CD8-positive, alpha-beta T cell (primary cell): ENCODE measurements at regions of chr11 and their contacts with region 1.

Region 1: GRCh38 chr11:35246745-35247144 is 107.8 kb downstream of the CD44 start:
- DNase-seq: no peak
- ATAC-seq: no peak
- H3K4me3 ChIP-seq: no peak overlapping the region
- H3K4me3 Mint-ChIP-seq: no peak overlapping the region
- H3K27ac ChIP-seq: peak overlapping the region; percentile 79 to 84
- H3K27ac Mint-ChIP-seq: peak overlapping the region; percentile 98
- H3K4me1 ChIP-seq: peaks cover 63% of the 10 kb centered on the region
- H3K4me1 Mint-ChIP-seq: peaks cover 80% of the 10 kb centered on the region
- H3K27me3 ChIP-seq: no peaks in the 10 kb centered on the region
- H3K27me3 Mint-ChIP-seq: no peaks in the 10 kb centered on the region
- CTCF ChIP-seq: no peak

Region 2: GRCh38 chr11:35040221-35040942 is 206.4 kb before region 1 on chr11:
- CTCF ChIA-PET with region 1: no interaction called
- POLR2A ChIA-PET with region 1: no interaction called
- intact Hi-C with region 1: loop called in 1 of 2 experiments (anchors 5 kb)
- DNase-seq: peak in 8 of 9 experiments; percentile 16 to 87 (median 55)
- ATAC-seq: peak; percentile 77
- H3K4me3 ChIP-seq: peak overlapping the region in 1 of 2 experiments; percentile 46
- H3K4me3 Mint-ChIP-seq: peak overlapping the region; percentile 79
- H3K27ac ChIP-seq: peak overlapping the region; percentile 36 to 83
- H3K27ac Mint-ChIP-seq: peak overlapping the region; percentile 97
- H3K4me1 ChIP-seq: peaks cover 25% of the 10 kb centered on the region
- H3K4me1 Mint-ChIP-seq: peaks cover 35% of the 10 kb centered on the region
- H3K27me3 ChIP-seq: no peaks in the 10 kb centered on the region
- H3K27me3 Mint-ChIP-seq: no peaks in the 10 kb centered on the region
- CTCF ChIP-seq: no peak

Region 3: DNA sequence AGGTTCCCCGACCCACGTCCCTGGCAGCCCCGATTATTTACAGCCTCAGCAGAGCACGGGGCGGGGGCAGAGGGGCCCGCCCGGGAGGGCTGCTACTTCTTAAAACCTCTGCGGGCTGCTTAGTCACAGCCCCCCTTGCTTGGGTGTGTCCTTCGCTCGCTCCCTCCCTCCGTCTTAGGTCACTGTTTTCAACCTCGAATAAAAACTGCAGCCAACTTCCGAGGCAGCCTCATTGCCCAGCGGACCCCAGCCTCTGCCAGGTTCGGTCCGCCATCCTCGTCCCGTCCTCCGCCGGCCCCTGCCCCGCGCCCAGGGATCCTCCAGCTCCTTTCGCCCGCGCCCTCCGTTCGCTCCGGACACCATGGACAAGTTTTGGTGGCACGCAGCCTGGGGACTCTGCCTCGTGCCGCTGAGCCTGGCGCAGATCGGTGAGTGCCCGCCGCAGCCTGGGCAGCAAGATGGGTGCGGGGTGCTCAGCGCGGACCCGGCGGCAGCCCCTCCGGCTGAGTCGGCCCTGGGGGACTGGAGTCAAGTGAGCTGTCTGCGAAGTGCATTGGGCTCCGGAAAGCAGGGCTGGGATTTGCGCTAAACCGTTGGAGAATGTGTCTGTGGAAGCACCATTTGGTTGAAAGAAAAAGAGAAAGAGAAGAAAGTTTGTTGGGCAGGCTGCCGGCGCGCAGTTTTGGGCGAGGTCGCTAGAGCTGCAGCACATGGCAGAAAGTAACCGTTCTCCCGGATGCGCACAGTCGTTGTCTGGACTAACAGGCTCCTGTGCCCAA is 107.6 kb before region 1 on chr11 and contains the start of gene CD44:
- CTCF ChIA-PET with region 1: no interaction called
- POLR2A ChIA-PET with region 1: interaction called, 11 read pairs
- intact Hi-C with region 1: loop called in 1 of 2 experiments (anchors 2 kb)
- DNase-seq: peak; percentile 67 to 93 (median 85)
- ATAC-seq: peak; percentile 83
- H3K4me3 ChIP-seq: peak within 1 kb of the TSS; percentile 80 to 97
- H3K4me3 Mint-ChIP-seq: peak within 1 kb of the TSS; percentile 90
- H3K27ac ChIP-seq: peak within 1 kb of the TSS; percentile 82 to 98
- H3K27ac Mint-ChIP-seq: peak within 1 kb of the TSS; percentile 98
- H3K4me1 ChIP-seq: peaks cover 35% of the 10 kb centered on the region
- H3K4me1 Mint-ChIP-seq: peaks cover 47% of the 10 kb centered on the region
- H3K27me3 ChIP-seq: no peaks in the 10 kb centered on the region
- H3K27me3 Mint-ChIP-seq: no peaks in the 10 kb centered on the region
- CTCF ChIP-seq: no peak
- total RNA-seq, gene CD44: 1,070 to 1,104 TPM

Region 4: GRCh38 chr11:35214792-35215193 is 32.0 kb before region 1 on chr11:
- CTCF ChIA-PET with region 1: interaction called, 3 read pairs
- POLR2A ChIA-PET with region 1: interaction called, 4 read pairs
- intact Hi-C with region 1: loop called in 1 of 2 experiments (anchors 2 kb)
- DNase-seq: peak in 2 of 9 experiments; percentile 25 to 51
- ATAC-seq: peak; percentile 33
- H3K4me3 ChIP-seq: no peak overlapping the region
- H3K4me3 Mint-ChIP-seq: no peak overlapping the region
- H3K27ac ChIP-seq: peak overlapping the region in 1 of 2 experiments; percentile 50
- H3K27ac Mint-ChIP-seq: peak overlapping the region; percentile 92
- H3K4me1 ChIP-seq: peaks cover 43% of the 10 kb centered on the region
- H3K4me1 Mint-ChIP-seq: peaks cover 74% of the 10 kb centered on the region
- H3K27me3 ChIP-seq: no peaks in the 10 kb centered on the region
- H3K27me3 Mint-ChIP-seq: no peaks in the 10 kb centered on the region
- CTCF ChIP-seq: no peak

Region 5: DNA sequence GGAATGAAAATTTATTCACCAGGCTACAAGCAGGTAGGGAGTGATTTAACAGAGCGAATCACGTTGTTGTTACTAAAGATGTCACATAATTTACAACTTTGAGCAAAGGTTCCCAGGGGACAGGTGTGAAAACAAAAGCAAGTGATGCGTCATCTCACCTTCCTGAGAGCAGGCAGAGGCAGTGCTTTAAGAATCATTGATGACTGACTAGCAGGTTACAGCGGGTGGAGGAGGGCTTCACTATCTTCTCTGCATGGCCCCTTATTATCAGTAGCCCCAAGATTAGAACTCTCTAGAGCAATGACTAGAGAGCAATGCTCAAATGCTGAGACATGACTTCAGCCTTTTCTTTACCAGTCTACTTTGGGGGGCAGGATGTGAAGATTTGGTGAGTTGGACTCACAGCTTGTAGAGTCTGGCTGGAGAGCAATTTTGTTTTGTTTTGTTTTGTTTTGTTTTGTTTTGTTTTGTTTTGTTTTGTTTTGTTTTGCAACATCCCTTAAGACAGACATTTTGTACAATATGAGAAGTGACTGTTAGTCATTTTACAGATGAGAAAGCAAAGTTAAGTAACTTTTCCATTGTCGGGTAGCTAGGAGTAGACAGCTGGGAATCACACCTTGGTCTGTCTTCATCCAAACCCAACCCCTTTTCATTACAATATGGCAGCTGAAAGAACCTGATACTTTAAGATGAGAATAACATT is 87.8 kb after region 1 on chr11:
- CTCF ChIA-PET with region 1: no interaction called
- POLR2A ChIA-PET with region 1: interaction called, 3 read pairs
- intact Hi-C with region 1: loop called in 1 of 2 experiments (anchors 1 kb)
- DNase-seq: peak in 4 of 9 experiments; percentile 25 to 76 (median 63)
- ATAC-seq: peak; percentile 45
- H3K4me3 ChIP-seq: no peak overlapping the region
- H3K4me3 Mint-ChIP-seq: no peak overlapping the region
- H3K27ac ChIP-seq: no peak overlapping the region
- H3K27ac Mint-ChIP-seq: peak overlapping the region; percentile 89
- H3K4me1 ChIP-seq: peaks cover 28% of the 10 kb centered on the region
- H3K4me1 Mint-ChIP-seq: peaks cover 47% of the 10 kb centered on the region
- H3K27me3 ChIP-seq: no peaks in the 10 kb centered on the region
- H3K27me3 Mint-ChIP-seq: no peaks in the 10 kb centered on the region
- CTCF ChIP-seq: no peak